ENCODE measurements at regions of chr11 and their contacts with region 1.

Region 1: DNA sequence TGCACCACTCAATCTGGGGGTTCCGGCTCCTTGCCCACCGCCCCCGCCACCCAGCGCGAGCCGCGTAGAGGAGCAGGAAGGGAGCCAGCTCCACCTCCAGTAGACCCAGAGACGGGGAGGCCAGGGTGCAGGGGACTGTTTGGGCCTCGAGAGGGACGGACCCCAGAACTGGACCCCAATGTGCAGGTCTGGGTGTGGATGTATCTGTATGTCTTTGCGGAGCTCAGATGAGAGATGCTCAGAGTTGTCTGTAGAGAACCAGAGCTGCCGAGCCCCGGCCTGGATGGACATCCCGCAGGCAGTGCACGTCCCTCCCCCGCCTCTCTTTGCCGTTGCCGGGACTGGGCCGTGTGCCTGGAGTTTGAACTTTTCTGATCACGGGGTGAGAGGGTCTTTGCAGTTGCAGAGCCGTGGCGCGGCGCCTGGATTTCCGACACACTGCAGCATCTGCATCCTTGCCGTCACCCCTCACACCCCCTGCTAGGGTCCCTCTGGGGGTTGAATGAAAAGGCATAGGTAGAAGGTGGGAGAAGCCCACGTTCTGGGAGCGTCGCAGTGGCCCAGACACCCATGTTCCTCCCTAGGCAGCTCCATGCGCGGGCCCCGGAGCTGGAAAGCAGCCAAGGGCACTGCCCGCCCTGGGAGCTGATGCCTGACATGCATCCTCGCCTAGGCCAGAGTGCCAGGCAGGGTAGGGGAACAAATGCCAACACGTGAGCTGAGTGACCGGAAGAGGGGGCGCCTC is 105.2 kb downstream of the KCNQ1 start:
- DNase-seq: peak in 4 of 5 donors; percentile 52 to 77 (median 65)
- ATAC-seq: peak; percentile 38 to 84 (median 82)
- H3K4me3 ChIP-seq: no peak overlapping the region
- H3K27ac ChIP-seq: no peak overlapping the region
- H3K4me1 ChIP-seq: peaks cover 0 to 12% (median 0%) of the 10 kb centered on the region in 12 donors
- H3K27me3 ChIP-seq: no peaks in the 10 kb centered on the region
- CTCF ChIP-seq: no peak
- POLR2A ChIP-seq: no peak

Region 2: DNA sequence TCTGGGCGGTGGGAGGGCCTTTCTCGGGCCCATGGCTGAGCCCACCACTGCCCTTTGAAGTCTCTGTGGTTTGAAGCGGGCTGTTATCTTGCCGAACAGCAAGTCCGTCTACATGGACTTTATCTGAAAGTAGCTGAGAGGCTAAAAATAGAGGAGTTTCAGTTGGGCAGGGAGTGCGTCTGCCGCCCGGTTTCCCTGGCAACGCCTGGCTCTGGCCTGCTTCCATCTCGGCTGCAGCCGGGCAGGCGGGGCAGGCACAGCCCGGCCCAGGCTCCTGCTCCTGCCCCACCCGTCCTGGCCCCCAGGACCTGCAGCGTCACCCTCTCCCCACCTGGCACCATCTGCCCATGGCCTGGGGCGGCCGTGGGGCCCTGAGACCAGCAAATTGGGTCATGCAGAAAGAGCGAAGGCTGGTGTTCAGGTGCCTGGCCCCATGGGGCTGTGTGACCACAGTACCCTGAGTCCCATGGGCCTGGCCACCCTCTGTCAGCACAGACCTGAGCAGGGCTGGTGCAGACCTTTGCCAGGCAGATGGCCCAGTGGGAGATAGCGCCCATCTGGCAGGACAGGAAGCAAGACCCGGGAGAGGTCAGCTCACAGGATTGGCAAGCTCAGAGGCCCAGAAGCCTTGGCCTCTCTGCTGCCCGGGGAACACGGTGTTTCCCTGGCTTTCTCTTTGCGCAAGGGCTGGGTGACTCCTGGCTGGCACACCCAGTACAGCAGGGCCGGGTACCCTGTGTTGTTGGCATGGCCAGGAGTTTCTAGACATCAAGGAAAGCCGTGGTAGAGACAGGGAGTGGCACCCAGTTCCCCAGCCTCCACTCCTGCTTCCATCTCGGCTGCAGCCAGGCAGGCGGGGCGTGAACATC is 228.8 kb after region 1 on chr11:
- intact Hi-C with region 1: loop called in 1 of 10 experiments (anchors 10 kb)
- DNase-seq: peak; percentile 80 to 94 (median 83)
- ATAC-seq: peak; percentile 86 to 91 (median 88)
- H3K4me3 ChIP-seq: peak overlapping the region in 5 of 12 donors; percentile 20 to 37 (median 32)
- H3K27ac ChIP-seq: peak overlapping the region; percentile 63 to 99 (median 90)
- H3K4me1 ChIP-seq: peaks cover 20 to 49% (median 41%) of the 10 kb centered on the region in 12 donors
- H3K27me3 ChIP-seq: no peaks in the 10 kb centered on the region
- CTCF ChIP-seq: peak in 9 of 12 donors; percentile 16 to 46 (median 35)
- POLR2A ChIP-seq: no peak